Ovary (tissue), 10 donors: ENCODE measurements at regions of chr11 and their contacts with region 1.

Region 1: DNA sequence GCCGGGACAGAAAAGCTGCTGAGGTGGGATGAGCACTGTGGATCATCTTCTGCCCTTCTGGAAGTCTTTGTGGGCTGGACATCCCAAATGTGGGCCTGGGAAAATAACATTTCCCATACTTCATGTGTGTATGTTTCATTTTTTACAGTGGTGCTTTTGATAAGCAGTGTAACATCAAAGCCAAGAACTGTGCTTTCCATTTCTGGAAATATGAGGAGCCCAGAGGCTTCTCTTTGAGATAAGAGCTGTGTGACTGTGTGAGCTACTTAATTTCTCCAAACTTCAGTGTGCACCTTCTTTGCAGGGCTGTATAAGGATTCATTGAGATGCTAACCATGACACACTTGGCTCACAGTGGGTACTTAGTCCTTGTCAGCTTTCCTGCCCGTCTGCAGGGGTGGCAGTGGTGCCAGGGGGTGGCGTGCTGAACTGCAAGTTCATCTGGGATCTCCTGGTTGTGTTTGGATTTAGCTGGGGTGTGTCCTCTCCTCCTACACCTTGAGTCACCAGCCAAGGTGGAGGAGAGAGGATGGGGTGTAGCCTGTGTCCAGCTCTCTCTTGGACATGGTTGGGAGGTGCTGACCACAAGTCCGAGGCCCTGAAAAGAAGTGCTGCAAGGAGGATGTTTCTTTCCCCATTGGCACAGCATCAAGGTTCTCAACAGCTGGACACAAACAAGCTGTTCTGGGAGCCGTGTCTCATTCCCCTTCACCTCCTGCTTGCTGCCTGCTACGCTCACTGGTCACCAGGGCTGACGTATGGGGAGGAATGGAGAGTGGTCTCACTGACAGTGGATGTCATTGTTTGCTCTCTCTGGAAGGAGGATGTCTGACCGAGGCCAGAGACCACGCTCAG is 139.4 kb downstream of the TEAD1 start:
- DNase-seq: peak; percentile 74 to 84 (median 76)
- H3K4me3 ChIP-seq: no peak overlapping the region
- H3K27ac ChIP-seq: peak overlapping the region; percentile 80 to 83
- H3K4me1 ChIP-seq: peaks cover 30% of the 10 kb centered on the region
- H3K27me3 ChIP-seq: no peaks in the 10 kb centered on the region
- CTCF ChIP-seq: peak in 1 of 3 donors; percentile 8
- EP300 ChIP-seq: no peak
- POLR2A ChIP-seq: no peak

Region 2: GRCh38 chr11:12331239-12331874 is 482.2 kb before region 1 on chr11:
- intact Hi-C with region 1: loop called in 1 of 4 experiments (anchors 2 kb)
- DNase-seq: peak; percentile 84 to 92 (median 90)
- H3K4me3 ChIP-seq: no peak overlapping the region
- H3K27ac ChIP-seq: no peak overlapping the region
- H3K4me1 ChIP-seq: no peaks in the 10 kb centered on the region
- H3K27me3 ChIP-seq: no peaks in the 10 kb centered on the region
- CTCF ChIP-seq: peak; percentile 57 to 86 (median 85)
- EP300 ChIP-seq: no peak
- POLR2A ChIP-seq: no peak

Region 3: GRCh38 chr11:12430955-12431354 is 382.6 kb before region 1 on chr11:
- intact Hi-C with region 1: no loop called
- DNase-seq: peak; percentile 76 to 90 (median 83)
- H3K4me3 ChIP-seq: no peak overlapping the region
- H3K27ac ChIP-seq: peak overlapping the region; percentile 66 to 81
- H3K4me1 ChIP-seq: peaks cover 31% of the 10 kb centered on the region
- H3K27me3 ChIP-seq: no peaks in the 10 kb centered on the region
- CTCF ChIP-seq: no peak
- EP300 ChIP-seq: no peak
- POLR2A ChIP-seq: no peak

Region 4: DNA sequence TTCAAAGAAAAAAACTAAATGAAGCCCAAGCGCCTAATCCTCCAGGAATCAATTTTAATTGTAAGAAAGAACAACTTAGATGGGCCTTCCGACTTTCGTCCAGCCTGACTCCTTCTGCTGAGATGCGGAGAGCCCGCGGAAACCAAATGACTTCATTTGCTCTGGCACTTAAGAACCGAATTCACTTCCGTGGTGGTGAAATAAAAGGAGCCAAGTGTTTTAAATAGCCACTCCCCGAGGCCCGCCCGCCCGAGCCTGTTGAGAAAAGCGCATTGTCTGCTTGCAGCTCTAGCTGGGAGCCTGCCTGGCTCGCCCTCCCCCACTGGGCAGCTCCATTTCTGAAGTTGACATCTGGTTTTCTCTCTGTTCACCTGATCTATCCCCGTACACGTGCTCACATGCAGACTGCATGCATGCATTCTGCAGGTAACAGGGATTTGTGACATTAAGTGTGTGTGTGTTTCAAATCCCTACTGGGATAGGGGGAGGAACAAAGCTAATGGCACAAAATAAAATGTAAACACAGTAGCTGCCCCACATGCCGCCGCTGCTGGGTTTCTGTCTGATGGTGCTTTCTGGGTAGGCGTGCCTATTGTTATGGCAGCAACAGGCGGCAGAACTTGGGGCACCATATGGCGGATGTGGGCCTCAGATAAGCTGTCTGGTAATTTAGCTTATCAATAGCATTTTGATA is 133.2 kb before region 1 on chr11:
- intact Hi-C with region 1: loop called (anchors 10 kb)
- DNase-seq: peak; percentile 70 to 78 (median 74)
- H3K4me3 ChIP-seq: no peak overlapping the region
- H3K27ac ChIP-seq: no peak overlapping the region
- H3K4me1 ChIP-seq: peaks cover 13% of the 10 kb centered on the region
- H3K27me3 ChIP-seq: no peaks in the 10 kb centered on the region
- CTCF ChIP-seq: no peak
- EP300 ChIP-seq: no peak
- POLR2A ChIP-seq: no peak